Keratinocyte (primary cell): ENCODE measurements at regions of chr9 and their contacts with region 1.

Region 1: DNA sequence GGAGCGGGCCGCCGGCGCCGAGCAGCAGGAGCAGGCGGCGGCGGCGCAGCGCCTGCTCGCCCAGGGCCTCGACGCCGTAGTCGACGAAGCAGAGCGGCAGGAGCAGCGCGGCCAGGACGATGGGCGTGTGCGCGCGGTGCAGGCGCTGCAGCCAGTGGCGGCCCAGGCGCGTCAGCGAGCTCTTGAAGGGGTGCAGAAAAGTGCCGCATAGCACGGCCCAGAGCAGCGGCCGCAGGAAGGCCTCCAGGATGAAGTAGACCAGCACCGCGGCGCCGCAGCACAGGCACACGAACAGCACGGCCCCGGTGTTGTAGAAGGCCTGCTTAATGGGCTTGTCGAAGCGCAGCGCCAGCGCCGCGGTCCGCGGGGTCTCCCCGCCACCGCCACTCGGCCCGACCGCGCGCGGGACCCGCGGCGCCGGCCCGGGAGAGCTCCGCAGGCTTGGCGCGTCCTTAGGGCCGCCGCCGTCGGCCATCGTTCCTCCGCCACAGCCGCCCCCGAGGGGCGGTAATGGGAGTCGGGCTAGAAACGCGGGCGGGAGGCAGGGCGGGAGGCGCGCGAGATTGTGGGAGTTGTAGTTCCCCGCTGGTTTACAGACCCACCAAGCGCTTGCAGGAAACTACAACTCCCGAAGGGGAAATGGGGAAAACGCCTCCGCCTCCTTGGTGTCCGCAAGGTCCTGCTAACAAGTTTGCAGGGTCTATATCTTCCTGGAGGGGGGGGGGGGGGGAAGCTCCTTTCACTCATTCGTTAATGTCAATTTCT is at the start of gene TMEM245:
- DNase-seq: peak; percentile 95
- H3K4me3 ChIP-seq: peak within 1 kb of the TSS; percentile 89 to 94 (median 89)
- H3K27ac ChIP-seq: peak within 1 kb of the TSS; percentile 94
- H3K4me1 ChIP-seq: peaks cover 36% of the 10 kb centered on the region
- H3K27me3 ChIP-seq: no peaks in the 10 kb centered on the region
- CTCF ChIP-seq: no peak
- polyA plus RNA-seq, gene TMEM245: 40.0 to 46.1 TPM (median 41.6 TPM) in 3 replicates

Region 2: DNA sequence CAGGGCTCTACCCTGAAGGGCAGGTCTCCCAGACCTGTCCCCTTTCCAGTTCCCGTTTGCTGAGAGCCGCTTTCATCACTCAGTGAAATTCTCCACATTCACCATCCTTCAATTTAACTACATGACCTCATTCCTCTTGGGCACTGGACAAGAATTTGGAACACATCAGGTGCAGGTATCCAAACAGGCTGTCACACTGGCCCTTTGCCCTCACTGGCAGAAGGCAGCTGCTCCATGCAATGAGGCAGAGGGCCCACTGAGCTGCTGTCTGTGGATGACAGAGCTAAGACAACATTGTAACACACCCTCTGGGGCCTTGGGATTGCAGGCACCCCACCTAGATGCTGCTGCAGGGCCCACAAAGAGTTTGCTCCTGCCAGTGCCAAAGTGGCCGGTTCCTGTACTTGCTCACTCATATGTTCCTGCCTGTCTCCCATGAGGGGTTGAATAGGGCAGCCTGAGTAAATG is 319.0 kb before region 1 on chr9:
- dilution Hi-C with region 1: no loop called
- DNase-seq: no peak
- H3K4me3 ChIP-seq: no peak overlapping the region
- H3K27ac ChIP-seq: no peak overlapping the region
- H3K4me1 ChIP-seq: peaks cover 5% of the 10 kb centered on the region
- H3K27me3 ChIP-seq: no peaks in the 10 kb centered on the region
- CTCF ChIP-seq: no peak

Region 3: GRCh38 chr9:109083813-109084405 is 35.7 kb before region 1 on chr9:
- dilution Hi-C with region 1: loop called (anchors 5 kb)
- DNase-seq: no peak
- H3K4me3 ChIP-seq: no peak overlapping the region
- H3K27ac ChIP-seq: no peak overlapping the region
- H3K4me1 ChIP-seq: peaks cover 5% of the 10 kb centered on the region
- H3K27me3 ChIP-seq: no peaks in the 10 kb centered on the region
- CTCF ChIP-seq: no peak

Region 4: GRCh38 chr9:109182940-109183798 is 63.5 kb after region 1 on chr9:
- dilution Hi-C with region 1: loop called (anchors 10 kb)
- DNase-seq: no peak
- H3K4me3 ChIP-seq: no peak overlapping the region
- H3K27ac ChIP-seq: no peak overlapping the region
- H3K4me1 ChIP-seq: no peaks in the 10 kb centered on the region
- H3K27me3 ChIP-seq: peaks cover 10% of the 10 kb centered on the region
- CTCF ChIP-seq: peak; percentile 39 to 77 (median 55)

Region 5: GRCh38 chr9:109238655-109239054 is 119.0 kb after region 1 on chr9:
- dilution Hi-C with region 1: no loop called
- DNase-seq: no peak
- H3K4me3 ChIP-seq: no peak overlapping the region
- H3K27ac ChIP-seq: no peak overlapping the region
- H3K4me1 ChIP-seq: peaks cover 12% of the 10 kb centered on the region
- H3K27me3 ChIP-seq: no peaks in the 10 kb centered on the region
- CTCF ChIP-seq: no peak